Prostate gland (tissue), 2 donors: ENCODE measurements at regions of chr22 and their contacts with region 1.

Region 1: DNA sequence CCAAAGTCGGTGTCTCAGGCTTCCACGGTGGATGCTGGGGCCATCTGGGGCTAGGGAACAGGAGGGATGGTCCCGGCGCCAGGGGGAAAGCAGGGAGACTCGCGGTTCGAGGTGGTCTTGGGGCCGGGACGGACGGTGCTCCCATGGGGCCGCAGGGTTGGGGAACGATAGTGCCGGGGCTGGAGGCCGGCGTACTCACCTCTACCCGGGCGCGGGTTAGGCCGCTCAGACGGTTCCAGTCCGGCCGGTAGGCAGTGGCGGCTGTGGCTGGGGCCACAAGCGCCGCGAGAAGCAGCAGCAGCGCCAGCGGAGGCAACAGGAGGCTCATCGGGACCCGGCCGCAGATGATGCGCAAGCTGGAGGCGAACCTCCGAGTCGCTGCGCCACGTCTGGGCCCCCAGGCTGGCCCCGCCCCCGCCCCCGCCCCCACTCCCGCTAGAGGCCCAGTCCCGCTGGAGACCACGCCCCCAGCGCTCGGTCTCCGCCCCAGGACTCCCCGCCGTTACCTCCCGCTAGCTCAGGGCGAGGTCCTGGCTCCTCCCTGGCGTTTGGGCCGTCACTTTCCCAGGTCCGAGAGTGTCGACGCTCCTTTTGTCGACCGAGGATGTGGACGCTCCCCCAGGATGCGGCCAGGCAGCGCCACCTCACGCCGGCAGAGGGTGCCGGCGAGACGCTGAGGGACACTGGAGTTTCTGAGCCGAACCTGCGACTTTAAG is at the start of gene SELENOM:
- DNase-seq: peak; percentile 98
- H3K4me3 ChIP-seq: peak within 1 kb of the TSS; percentile 64 to 91
- H3K27ac ChIP-seq: peak within 1 kb of the TSS; percentile 90 to 97
- H3K4me1 ChIP-seq: peaks cover 4% of the 10 kb centered on the region
- H3K27me3 ChIP-seq: no peaks in the 10 kb centered on the region
- CTCF ChIP-seq: peak; percentile 66 to 99 (median 96)
- POLR2A ChIP-seq: peak; percentile 64
- total RNA-seq, gene SELENOM: 382 to 434 TPM

Region 2: DNA sequence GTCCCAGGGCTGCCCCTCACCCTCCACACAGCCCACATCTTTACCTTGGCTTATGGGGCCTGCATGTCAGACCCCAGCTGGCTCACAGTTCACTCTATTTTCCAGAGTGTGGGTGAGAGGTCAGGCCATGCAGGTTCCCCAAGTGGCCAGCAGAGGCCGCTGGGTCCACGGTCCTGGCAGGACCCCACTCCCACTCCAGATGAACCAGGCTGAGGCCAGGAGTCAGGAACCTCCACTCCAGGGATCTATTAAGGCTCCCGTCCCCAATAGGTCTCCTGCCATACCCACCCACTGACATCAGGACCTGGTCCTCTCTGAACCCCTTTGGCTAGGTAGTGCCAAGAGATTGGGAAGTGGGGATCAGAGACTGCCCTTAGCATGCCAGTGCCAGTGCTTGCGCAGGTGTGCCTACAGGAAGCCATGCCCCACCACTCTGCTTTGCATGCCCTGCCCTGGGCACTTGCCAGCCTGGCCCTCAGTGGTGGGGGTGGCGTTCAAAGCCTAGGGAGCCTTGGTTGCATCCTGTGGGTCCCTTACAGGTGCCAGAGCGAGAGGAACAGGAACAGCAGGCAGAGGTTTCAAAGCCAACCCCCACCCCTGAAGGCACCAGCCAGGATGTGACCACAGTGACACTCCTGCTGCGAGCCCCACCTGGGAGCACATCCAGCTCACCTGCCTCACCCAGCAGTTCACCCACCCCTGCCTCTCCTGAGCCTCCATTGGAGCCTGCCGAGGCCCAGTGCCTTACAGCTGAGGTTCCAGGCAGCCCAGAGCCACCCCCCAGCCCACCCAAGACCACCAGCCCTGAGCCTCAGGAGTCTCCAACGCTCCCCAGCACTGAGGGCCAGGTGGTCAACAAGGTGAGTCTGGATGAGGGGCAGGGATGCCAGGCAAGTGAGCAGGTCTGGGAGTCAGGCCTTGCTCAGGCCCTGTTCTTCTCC is 17.9 kb before region 1 on chr22:
- intact Hi-C with region 1: loop called (anchors 2 kb)
- DNase-seq: no peak
- H3K4me3 ChIP-seq: no peak overlapping the region
- H3K27ac ChIP-seq: peak overlapping the region; percentile 77 to 90
- H3K4me1 ChIP-seq: no peaks in the 10 kb centered on the region
- H3K27me3 ChIP-seq: no peaks in the 10 kb centered on the region
- CTCF ChIP-seq: peak; percentile 53 to 81 (median 65)
- POLR2A ChIP-seq: no peak

Region 3: GRCh38 chr22:31230871-31231621 is 123.7 kb after region 1 on chr22:
- intact Hi-C with region 1: loop called (anchors 2 kb)
- DNase-seq: peak; percentile 74
- H3K4me3 ChIP-seq: no peak overlapping the region
- H3K27ac ChIP-seq: peak overlapping the region; percentile 63 to 67
- H3K4me1 ChIP-seq: peaks cover 6% of the 10 kb centered on the region
- H3K27me3 ChIP-seq: no peaks in the 10 kb centered on the region
- CTCF ChIP-seq: peak in 3 of 4 experiments; percentile 76 to 95 (median 90)
- POLR2A ChIP-seq: no peak

Region 4: DNA sequence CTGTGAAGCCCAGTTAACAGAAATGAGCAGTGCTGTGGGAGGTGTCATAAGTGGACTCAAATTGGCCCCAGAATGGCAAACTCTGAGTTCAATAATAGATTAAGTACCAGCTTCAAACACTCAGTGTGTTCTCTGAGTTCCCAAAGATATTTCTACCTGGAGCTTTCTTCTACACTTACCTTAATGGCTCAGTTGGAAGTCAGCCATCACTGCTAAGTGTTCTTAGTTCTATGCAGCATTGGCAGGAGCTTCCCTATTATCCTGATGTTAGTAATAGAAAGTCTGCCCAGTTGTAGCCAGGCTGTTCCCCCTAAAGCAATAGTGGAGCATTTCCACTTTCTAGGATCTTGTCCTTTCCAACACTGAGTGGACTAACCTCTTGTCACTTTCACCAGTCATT is 194.7 kb after region 1 on chr22:
- intact Hi-C with region 1: no loop called
- DNase-seq: peak; percentile 48
- H3K4me3 ChIP-seq: no peak overlapping the region
- H3K27ac ChIP-seq: no peak overlapping the region
- H3K4me1 ChIP-seq: no peaks in the 10 kb centered on the region
- H3K27me3 ChIP-seq: no peaks in the 10 kb centered on the region
- CTCF ChIP-seq: no peak
- POLR2A ChIP-seq: no peak